ENCODE measurements at regions of chr21 and their contacts with region 1.

Region 1: GRCh38 chr21:33479679-33480480 is at the start of gene TMEM50B:
- DNase-seq: peak; percentile 93
- H3K4me3 Mint-ChIP-seq: peak within 1 kb of the TSS; percentile 90
- H3K27ac Mint-ChIP-seq: peak within 1 kb of the TSS; percentile 97
- H3K4me1 Mint-ChIP-seq: peaks cover 25% of the 10 kb centered on the region
- H3K27me3 Mint-ChIP-seq: no peaks in the 10 kb centered on the region
- total RNA-seq, gene TMEM50B: 33.5 to 34.4 TPM

Region 2: GRCh38 chr21:33491373-33492102 is 11.7 kb after region 1 on chr21 and contains the start of gene DNAJC28:
- CTCF ChIA-PET with region 1: interaction called, 20 read pairs
- POLR2A ChIA-PET with region 1: interaction called, 15 read pairs
- DNase-seq: peak; percentile 94
- H3K4me3 Mint-ChIP-seq: peak within 1 kb of the TSS; percentile 84
- H3K27ac Mint-ChIP-seq: peak within 1 kb of the TSS; percentile 86
- H3K4me1 Mint-ChIP-seq: peaks cover 12% of the 10 kb centered on the region
- H3K27me3 Mint-ChIP-seq: peaks cover 10% of the 10 kb centered on the region
- total RNA-seq, gene DNAJC28: 0.40 to 0.58 TPM

Region 3: GRCh38 chr21:33668180-33668579 is 188.3 kb after region 1 on chr21:
- CTCF ChIA-PET with region 1: no interaction called
- POLR2A ChIA-PET with region 1: no interaction called
- DNase-seq: no peak
- H3K4me3 Mint-ChIP-seq: no peak overlapping the region
- H3K27ac Mint-ChIP-seq: no peak overlapping the region
- H3K4me1 Mint-ChIP-seq: no peaks in the 10 kb centered on the region
- H3K27me3 Mint-ChIP-seq: no peaks in the 10 kb centered on the region